WTC11 (cell line): ENCODE measurements at regions of chr10 and their contacts with region 1.

Region 1: DNA sequence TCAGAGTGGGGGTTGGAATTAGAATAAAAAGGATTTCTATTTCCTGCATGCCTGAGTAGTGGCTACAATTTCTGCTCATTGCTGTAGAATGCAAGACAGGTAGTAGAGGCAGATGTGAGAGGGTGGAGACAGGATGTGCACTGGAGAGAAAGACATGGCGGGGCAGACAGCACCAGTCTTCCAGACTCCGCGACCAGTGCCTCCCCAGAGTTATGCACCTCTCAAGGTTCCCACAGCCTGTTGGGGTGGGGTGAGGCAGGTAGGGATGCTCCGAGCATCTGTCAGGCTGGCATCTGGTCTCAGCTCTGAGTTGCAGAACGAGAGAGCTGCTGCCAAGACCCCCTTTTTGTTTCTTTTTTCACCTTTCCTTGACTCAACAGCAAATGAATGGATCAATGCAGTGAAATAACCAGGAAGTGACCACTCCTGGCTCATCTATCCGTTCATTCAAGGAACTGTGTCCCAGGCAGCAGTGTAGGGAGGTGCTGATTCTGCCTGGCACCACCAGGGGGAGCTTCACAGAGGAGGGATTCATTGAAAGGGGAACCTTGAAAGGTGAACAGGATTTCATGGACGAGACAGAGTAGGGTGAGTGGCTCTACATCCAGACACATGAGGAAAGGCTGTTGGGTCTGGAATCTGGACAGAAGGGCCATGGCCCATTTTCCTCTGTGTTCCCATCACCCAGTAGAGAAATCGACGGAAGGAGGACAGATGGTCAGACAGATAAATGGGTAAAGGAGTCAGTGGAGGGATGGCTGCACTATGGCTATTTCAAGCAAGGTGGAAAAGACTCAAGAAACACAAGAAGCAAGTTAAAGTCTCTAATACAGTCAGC is 17.2 kb upstream of the SLC18A3 start:
- DNase-seq: peak; percentile 83
- ATAC-seq: peak; percentile 85
- H3K4me3 Mint-ChIP-seq: no peak overlapping the region
- H3K27ac Mint-ChIP-seq: no peak overlapping the region
- H3K4me1 Mint-ChIP-seq: peaks cover 12% of the 10 kb centered on the region
- H3K27me3 Mint-ChIP-seq: no peaks in the 10 kb centered on the region; the same call in none of the 2 replicates
- CTCF ChIP-seq: peak; percentile 75

Region 2: DNA sequence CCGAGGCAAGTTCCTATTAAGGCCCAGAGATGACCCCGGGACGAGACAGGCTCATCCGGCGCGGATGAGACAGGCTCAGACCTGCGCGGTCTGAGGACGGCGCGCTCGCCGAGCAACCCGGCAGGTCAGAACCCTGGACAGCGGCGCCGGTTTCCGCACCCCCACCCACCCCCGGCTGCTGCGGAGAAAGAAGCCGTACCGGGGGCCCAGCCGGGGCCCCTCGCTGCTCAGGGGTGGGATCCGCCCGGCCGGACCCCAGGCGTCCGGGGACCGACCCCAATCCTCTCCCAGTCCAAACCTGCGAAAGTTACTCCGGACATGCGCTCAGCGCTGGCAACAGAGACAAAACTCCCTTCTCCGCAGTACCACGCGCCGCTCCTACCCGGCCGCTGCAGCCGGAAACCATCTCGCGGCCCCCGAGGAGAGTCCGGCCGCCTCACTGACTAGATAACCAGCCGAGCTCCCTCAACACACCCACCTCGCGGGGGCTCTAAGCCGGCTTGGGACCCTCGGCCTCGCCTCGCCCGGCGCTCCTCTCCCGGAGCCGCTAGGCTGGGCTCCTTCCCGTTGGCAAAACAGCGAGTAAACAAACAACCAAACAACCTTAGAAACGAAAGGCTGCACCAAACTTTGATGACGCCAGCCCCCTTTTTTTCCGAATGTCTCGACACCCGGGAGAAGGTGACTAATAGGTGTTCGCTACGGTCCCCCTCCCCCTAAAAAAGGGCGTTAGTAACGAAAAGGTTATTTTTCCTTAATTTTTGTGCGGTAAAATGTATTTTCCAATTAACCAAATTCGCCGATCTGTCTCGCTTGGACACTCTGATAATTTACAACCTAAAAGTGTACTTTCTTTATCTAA is 194.7 kb before region 1 on chr10:
- CTCF ChIA-PET with region 1: no interaction called
- POLR2A ChIA-PET with region 1: no interaction called
- DNase-seq: peak; percentile 78
- ATAC-seq: peak; percentile 73
- H3K4me3 Mint-ChIP-seq: peak overlapping the region; percentile 75
- H3K27ac Mint-ChIP-seq: no peak overlapping the region
- H3K4me1 Mint-ChIP-seq: peaks cover 33% of the 10 kb centered on the region
- H3K27me3 Mint-ChIP-seq: peaks cover 99% of the 10 kb centered on the region
- CTCF ChIP-seq: no peak

Region 3: GRCh38 chr10:49518982-49519578 is 73.9 kb before region 1 on chr10:
- CTCF ChIA-PET with region 1: no interaction called
- POLR2A ChIA-PET with region 1: no interaction called
- DNase-seq: peak; percentile 24
- ATAC-seq: peak; percentile 80
- H3K4me3 Mint-ChIP-seq: no peak overlapping the region
- H3K27ac Mint-ChIP-seq: no peak overlapping the region
- H3K4me1 Mint-ChIP-seq: peaks cover 22% of the 10 kb centered on the region
- H3K27me3 Mint-ChIP-seq: no peaks in the 10 kb centered on the region
- CTCF ChIP-seq: peak; percentile 64

Region 4: GRCh38 chr10:49538381-49539319 is 54.3 kb before region 1 on chr10 and contains the start of gene ERCC6:
- CTCF ChIA-PET with region 1: interaction called, 13 read pairs
- POLR2A ChIA-PET with region 1: no interaction called
- DNase-seq: peak; percentile 97
- ATAC-seq: peak; percentile 93
- H3K4me3 Mint-ChIP-seq: peak within 1 kb of the TSS; percentile 86
- H3K27ac Mint-ChIP-seq: peak within 1 kb of the TSS; percentile 81; the same call in 1 of the 2 replicates
- H3K4me1 Mint-ChIP-seq: peaks cover 36% of the 10 kb centered on the region
- H3K27me3 Mint-ChIP-seq: peaks cover 36% of the 10 kb centered on the region
- CTCF ChIP-seq: no peak
- total RNA-seq, gene ERCC6: 10.9 to 14.5 TPM (median 14.3 TPM) in 3 replicates

Region 5: DNA sequence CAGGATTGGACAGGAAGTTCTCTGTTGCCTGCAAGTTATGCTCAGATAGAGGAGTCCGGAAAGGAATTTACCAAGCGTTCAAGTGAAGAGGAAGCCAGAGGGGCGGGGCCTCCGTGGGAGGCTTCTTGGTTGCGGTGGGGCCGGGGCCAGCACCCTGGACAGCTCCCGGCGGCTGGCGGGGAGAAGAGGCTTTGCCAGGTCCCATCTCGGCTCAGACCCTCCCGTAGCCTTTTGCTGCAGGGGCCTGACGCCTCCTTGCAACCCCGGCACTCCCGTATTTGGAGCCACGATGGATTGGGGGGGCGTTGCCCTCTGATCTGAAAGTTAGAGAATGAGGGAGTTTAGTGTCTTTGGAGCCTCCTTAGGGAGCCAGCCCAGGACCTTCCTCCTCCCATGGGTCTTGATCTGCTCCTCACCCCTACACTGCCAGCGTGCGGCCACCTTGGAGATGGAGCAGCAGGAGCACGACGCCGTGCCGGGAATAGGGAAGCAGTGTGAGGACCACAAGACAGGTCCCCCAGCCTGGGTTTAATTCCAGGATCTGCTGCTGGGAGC is 14.1 kb after region 1 on chr10:
- CTCF ChIA-PET with region 1: interaction called, 22 read pairs
- POLR2A ChIA-PET with region 1: no interaction called
- DNase-seq: peak; percentile 91
- ATAC-seq: peak; percentile 49
- H3K4me3 Mint-ChIP-seq: no peak overlapping the region
- H3K27ac Mint-ChIP-seq: no peak overlapping the region
- H3K4me1 Mint-ChIP-seq: peaks cover 25% of the 10 kb centered on the region
- H3K27me3 Mint-ChIP-seq: peaks cover 97% of the 10 kb centered on the region
- CTCF ChIP-seq: no peak

Region 6: GRCh38 chr10:49612513-49613164 is 19.7 kb after region 1 on chr10:
- CTCF ChIA-PET with region 1: interaction called, 22 read pairs
- POLR2A ChIA-PET with region 1: no interaction called
- DNase-seq: peak; percentile 84
- ATAC-seq: peak; percentile 68
- H3K4me3 Mint-ChIP-seq: peak overlapping the region; percentile 58
- H3K27ac Mint-ChIP-seq: no peak overlapping the region
- H3K4me1 Mint-ChIP-seq: peaks cover 40% of the 10 kb centered on the region
- H3K27me3 Mint-ChIP-seq: peaks cover 98% of the 10 kb centered on the region
- CTCF ChIP-seq: no peak

Region 7: DNA sequence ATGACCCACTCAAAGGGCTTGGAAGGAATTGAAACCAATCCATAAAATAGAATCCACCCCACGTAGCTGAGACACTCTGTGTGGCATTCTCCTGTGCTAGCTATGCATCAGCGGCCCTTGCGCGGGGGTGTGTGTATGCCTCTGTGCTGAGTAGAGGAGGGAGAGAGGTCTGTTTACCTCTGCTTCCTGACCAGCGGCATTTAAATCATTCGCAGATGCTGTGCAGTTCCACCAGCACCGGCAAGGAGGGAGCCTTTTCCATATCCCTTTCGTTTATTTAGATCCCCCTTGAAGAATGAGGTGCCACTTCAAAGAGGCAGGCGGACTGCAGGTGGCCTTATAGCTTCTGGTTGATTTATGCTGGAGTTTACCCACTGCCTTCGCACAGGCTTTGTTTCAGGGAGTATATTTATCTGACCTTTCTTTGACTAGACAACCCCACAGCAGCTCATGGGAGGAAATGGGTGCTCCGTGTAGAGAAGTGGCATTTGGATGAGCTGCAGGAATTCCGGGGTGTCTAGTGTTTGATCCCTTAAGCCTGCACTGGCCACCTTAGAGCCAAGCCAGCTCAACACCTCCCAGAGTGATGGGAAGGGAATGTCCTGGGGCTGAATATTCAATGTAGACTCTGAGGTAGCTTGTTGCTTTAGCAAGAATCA is 97.9 kb after region 1 on chr10:
- CTCF ChIA-PET with region 1: interaction called, 12 read pairs
- POLR2A ChIA-PET with region 1: no interaction called
- DNase-seq: no peak
- ATAC-seq: peak; percentile 48
- H3K4me3 Mint-ChIP-seq: peak overlapping the region; percentile 59
- H3K27ac Mint-ChIP-seq: no peak overlapping the region
- H3K4me1 Mint-ChIP-seq: peaks cover 56% of the 10 kb centered on the region
- H3K27me3 Mint-ChIP-seq: peaks cover 100% of the 10 kb centered on the region
- CTCF ChIP-seq: no peak

Region 8: DNA sequence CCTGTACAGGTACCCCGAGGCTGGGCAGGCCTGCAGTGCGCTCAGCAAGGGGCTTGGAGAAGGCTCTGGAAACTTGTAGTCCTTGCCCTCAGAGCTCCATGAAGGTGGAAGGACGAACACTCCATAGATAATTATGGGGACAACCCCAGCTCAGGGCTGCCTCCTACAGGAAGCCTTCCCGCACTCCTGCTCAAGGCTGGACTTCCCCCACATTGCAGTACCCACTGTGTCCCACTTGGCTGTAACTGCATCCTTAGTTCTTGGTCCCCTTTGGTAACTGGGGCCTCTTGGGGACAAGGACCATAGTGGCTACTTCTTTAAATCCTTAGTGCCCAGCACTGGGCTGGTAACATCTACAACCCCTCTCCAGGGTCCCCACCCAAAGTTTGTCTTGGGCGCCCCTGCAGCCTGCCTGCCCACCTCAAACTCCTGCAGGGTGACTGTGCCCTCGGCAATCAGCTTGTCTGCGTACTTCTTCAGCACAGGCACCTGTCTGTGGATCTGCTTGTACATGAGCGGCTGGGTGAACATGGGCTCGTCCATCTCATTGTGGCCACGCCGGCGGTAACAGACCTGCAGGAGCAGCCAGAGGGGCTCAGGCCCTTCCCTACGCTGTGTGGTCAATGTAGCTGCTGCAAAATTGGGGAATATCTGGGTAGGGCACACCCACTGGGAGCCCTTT is 152.1 kb after region 1 on chr10:
- CTCF ChIA-PET with region 1: interaction called, 12 read pairs
- POLR2A ChIA-PET with region 1: interaction called, 3 read pairs
- DNase-seq: peak; percentile 45
- ATAC-seq: peak; percentile 87
- H3K4me3 Mint-ChIP-seq: no peak overlapping the region
- H3K27ac Mint-ChIP-seq: no peak overlapping the region
- H3K4me1 Mint-ChIP-seq: no peaks in the 10 kb centered on the region
- H3K27me3 Mint-ChIP-seq: no peaks in the 10 kb centered on the region
- CTCF ChIP-seq: no peak

Region 9: GRCh38 chr10:49798275-49798674 is 205.3 kb after region 1 on chr10:
- CTCF ChIA-PET with region 1: interaction called, 13 read pairs
- POLR2A ChIA-PET with region 1: no interaction called
- DNase-seq: no peak
- ATAC-seq: no peak
- H3K4me3 Mint-ChIP-seq: no peak overlapping the region
- H3K27ac Mint-ChIP-seq: no peak overlapping the region
- H3K4me1 Mint-ChIP-seq: no peaks in the 10 kb centered on the region
- H3K27me3 Mint-ChIP-seq: no peaks in the 10 kb centered on the region
- CTCF ChIP-seq: no peak